Left cardiac atrium (tissue), 4 donors: ENCODE measurements at regions of chr18 and their contacts with region 1.

Region 1: DNA sequence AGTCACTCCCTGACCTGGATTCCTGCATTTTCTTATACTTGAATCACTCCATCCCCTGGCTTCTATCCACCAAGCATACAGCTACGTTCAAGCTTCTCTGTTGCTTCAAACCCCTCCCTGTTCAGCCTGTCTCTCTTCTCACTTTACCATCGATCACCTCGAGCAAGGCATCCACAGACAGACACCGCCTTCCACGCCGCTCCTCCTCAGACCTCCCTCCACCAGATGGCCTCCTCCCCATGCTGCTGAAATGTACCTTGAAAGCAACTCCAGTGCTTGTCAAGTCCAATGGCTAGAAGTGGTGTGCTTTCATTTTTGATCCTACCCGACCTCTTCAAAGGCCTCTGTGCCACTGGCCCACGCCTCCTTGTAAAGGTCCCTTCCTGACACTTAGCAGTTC is 131.3 kb upstream of the ACAA2 start:
- DNase-seq: no peak
- ATAC-seq: peak; percentile 63 to 85

Region 2: DNA sequence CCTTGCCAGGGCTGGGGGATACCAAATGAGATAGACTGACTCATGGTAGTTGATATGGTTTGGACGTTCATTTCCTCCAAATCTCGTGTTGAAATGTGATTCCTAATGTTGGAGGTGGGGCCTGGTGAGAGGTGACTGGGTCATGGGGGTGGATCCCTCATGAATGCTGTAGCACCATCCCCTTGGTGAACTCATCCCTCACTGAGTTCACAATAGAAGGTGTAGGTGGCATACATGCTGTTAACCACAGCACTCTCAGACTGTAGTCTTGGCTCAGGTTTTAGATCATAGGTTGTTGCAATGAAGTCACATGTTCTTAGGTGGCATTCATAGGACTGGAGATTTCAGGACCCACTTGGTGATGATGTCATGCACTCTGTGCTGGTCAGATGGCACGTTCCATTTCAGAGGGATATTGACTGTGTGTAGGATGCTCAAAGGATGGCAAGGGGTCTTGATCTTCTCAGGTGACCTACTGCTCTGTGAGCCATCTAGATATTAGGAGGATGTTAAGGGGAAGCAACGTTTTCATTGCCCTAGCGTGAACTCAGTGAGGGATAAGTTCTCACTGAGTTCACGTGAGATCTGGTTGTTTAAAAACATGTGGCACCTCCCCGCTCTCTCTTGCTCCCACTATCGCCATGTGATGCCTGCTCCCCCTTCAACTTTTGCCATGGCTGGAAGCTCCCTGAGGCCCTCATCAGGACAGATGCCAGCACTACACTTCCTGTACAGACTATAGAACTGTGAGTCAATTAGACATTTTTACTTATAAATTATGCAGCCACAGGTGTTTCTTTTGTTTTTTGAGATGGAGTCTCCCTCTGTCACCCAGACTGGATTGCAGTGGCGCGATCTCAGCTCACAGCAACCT is 57.5 kb before region 1 on chr18:
- intact Hi-C with region 1: no loop called
- DNase-seq: no peak
- ATAC-seq: no peak

Region 3: GRCh38 chr18:50194631-50195532 is 250.2 kb after region 1 on chr18 and contains the start of gene MYO5B:
- intact Hi-C with region 1: loop called in 1 of 2 experiments (anchors 10 kb)
- DNase-seq: peak; percentile 46
- ATAC-seq: peak; percentile 89 to 90
- total RNA-seq, gene MYO5B: 4.6 to 7.2 TPM